ENCODE measurements at regions of chr18 and their contacts with region 1.

Region 1: DNA sequence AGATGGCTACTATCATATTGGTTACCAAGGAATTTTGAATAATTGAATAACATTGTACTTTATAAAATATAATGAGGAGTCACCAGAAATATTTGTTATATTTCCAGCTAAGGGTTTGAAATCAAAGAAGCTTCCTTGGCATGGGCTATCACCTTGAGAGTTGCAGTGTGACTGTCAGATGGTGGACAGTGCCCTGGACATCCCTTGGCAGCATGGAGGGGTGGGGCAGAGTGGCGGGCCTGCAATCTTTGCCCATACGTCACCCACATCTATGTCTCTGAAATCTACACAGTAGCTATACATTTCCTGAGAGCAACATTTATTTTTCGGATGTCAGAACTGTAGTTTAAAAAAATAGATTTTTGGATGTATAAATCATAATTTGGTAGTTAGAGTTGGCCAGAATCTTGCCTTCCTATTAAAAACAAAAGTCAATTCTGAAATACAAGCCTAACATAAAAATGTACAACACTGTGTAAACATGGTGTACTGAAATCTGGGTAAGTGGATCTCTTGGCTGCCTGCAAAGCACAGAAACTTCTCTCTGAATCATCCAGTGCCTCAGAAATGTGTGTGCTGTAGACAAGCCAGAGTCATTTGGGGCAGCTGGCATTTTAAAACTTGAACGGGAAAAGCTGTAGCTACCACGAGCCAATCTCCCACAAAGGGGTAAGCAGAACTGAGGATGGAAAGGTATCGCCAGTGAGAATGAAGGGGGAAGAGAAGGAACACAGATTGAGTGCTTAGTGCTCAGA is 124.2 kb upstream of the ARHGAP28 start:
- DNase-seq: peak; percentile 52
- H3K4me3 ChIP-seq: no peak overlapping the region
- H3K27ac ChIP-seq: peak overlapping the region; percentile 54 to 67
- H3K4me1 ChIP-seq: peaks cover 6% of the 10 kb centered on the region
- H3K27me3 ChIP-seq: no peaks in the 10 kb centered on the region
- CTCF ChIP-seq: no peak
- POLR2A ChIP-seq: no peak

Region 2: DNA sequence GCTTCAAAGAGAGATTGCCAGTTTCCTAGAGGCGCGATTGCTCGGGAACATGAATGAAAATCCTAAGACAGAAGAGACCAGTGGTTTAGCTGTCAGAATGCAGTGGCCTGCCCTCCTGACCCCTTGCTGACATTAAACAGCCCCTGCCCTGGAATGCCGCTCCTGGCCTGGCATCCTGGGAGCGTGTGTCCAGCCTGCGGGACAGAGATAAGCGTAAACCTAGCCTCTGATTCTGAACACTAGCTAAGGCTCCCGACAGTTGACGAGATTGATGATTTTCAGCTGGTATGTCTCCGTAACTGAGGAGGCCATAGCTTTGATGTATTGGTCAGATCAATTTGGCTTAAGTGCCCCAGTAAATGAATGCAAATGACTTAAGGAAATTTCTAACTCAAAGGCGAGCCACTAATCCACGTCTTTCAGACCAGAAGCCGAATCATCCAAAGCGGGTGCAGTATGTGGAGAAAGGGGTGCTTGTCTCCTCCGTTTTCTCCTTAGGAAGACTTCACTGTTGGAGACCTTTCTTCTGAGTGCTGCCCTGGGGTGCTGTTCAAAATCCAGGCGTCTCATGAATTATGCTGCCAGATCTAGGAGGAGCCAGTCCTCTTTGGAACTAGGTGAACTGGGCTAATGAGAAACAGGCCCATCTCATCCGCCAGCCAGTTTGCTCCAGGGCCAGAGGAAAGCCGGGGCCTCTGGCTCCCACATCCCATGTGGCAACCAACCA is 48.1 kb before region 1 on chr18:
- intact Hi-C with region 1: loop called (anchors 5 kb)
- DNase-seq: no peak
- H3K4me3 ChIP-seq: no peak overlapping the region
- H3K27ac ChIP-seq: no peak overlapping the region
- H3K4me1 ChIP-seq: no peaks in the 10 kb centered on the region
- H3K27me3 ChIP-seq: no peaks in the 10 kb centered on the region
- CTCF ChIP-seq: no peak
- POLR2A ChIP-seq: no peak